CD8-positive, alpha-beta T cell (primary cell): ENCODE measurements at regions of chr2 and their contacts with region 1.

Region 1: GRCh38 chr2:127387655-127388422 is at the start of gene MAP3K2:
- DNase-seq: peak; percentile 90 to 98 (median 97)
- ATAC-seq: peak; percentile 72
- H3K4me3 ChIP-seq: peak within 1 kb of the TSS; percentile 79 to 81
- H3K4me3 Mint-ChIP-seq: peak within 1 kb of the TSS; percentile 86
- H3K27ac ChIP-seq: peak within 1 kb of the TSS; percentile 99
- H3K27ac Mint-ChIP-seq: peak within 1 kb of the TSS; percentile 99
- H3K4me1 ChIP-seq: peaks cover 36% of the 10 kb centered on the region
- H3K4me1 Mint-ChIP-seq: peaks cover 63% of the 10 kb centered on the region
- H3K27me3 ChIP-seq: no peaks in the 10 kb centered on the region
- H3K27me3 Mint-ChIP-seq: no peaks in the 10 kb centered on the region
- CTCF ChIP-seq: no peak
- total RNA-seq, gene MAP3K2: 126 to 137 TPM

Region 2: GRCh38 chr2:127293748-127294562 is 93.9 kb before region 1 on chr2 and contains the start of gene ERCC3:
- CTCF ChIA-PET with region 1: no interaction called
- POLR2A ChIA-PET with region 1: no interaction called
- intact Hi-C with region 1: loop called in 1 of 2 experiments (anchors 1 kb)
- DNase-seq: peak; percentile 56 to 90 (median 83)
- ATAC-seq: peak; percentile 91
- H3K4me3 ChIP-seq: peak within 1 kb of the TSS; percentile 75 to 91
- H3K4me3 Mint-ChIP-seq: peak within 1 kb of the TSS; percentile 94
- H3K27ac ChIP-seq: peak within 1 kb of the TSS; percentile 74 to 76
- H3K27ac Mint-ChIP-seq: peak within 1 kb of the TSS; percentile 91
- H3K4me1 ChIP-seq: peaks cover 13% of the 10 kb centered on the region
- H3K4me1 Mint-ChIP-seq: peaks cover 45% of the 10 kb centered on the region
- H3K27me3 ChIP-seq: no peaks in the 10 kb centered on the region
- H3K27me3 Mint-ChIP-seq: no peaks in the 10 kb centered on the region
- CTCF ChIP-seq: no peak
- total RNA-seq, gene ERCC3: 43.2 to 46.4 TPM

Region 3: DNA sequence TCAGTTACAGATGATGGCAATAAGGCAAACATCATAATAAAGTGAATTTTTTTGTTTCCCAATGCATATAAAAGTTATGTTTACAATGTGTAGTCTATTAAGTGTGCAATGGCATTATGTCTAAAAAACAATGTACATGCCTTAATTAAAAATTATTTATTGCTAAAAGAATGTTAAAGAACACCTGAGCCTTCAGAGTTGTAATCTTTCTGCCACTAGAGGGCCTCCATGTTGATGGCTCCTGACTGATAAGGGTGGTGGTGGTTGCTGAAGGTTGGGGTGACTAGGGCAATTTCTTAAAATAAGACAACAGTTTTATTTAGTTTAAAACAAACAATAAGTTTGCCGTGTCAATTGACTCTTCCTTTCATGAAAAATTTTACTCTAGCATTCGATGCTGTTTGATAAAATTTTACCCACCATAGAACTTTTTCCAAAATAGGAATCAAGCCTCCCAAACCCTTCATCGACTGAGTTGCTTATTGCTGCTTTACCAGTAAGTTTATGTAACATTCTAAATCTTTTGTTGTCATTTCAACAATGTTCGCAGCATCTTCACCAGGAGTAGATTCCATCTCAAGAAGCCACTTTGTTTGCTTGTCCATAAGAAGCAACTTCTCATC is 32.3 kb before region 1 on chr2:
- CTCF ChIA-PET with region 1: no interaction called
- POLR2A ChIA-PET with region 1: no interaction called
- intact Hi-C with region 1: loop called in 1 of 2 experiments (anchors 2 kb)
- DNase-seq: peak in 6 of 9 experiments; percentile 5 to 71 (median 38)
- ATAC-seq: peak; percentile 74
- H3K4me3 ChIP-seq: no peak overlapping the region
- H3K4me3 Mint-ChIP-seq: no peak overlapping the region
- H3K27ac ChIP-seq: no peak overlapping the region
- H3K27ac Mint-ChIP-seq: no peak overlapping the region
- H3K4me1 ChIP-seq: peaks cover 4% of the 10 kb centered on the region
- H3K4me1 Mint-ChIP-seq: peaks cover 68% of the 10 kb centered on the region
- H3K27me3 ChIP-seq: no peaks in the 10 kb centered on the region
- H3K27me3 Mint-ChIP-seq: no peaks in the 10 kb centered on the region
- CTCF ChIP-seq: peak; percentile 79

Region 4: GRCh38 chr2:127415593-127416505 is 28.0 kb after region 1 on chr2:
- CTCF ChIA-PET with region 1: interaction called, 5 read pairs
- POLR2A ChIA-PET with region 1: interaction called, 7 read pairs
- intact Hi-C with region 1: loop called (anchors 1 to 5 kb)
- DNase-seq: peak; percentile 65 to 91 (median 85)
- ATAC-seq: peak; percentile 94
- H3K4me3 ChIP-seq: peak overlapping the region; percentile 63 to 69
- H3K4me3 Mint-ChIP-seq: peak overlapping the region; percentile 84
- H3K27ac ChIP-seq: no peak overlapping the region
- H3K27ac Mint-ChIP-seq: peak overlapping the region; percentile 77
- H3K4me1 ChIP-seq: peaks cover 11% of the 10 kb centered on the region
- H3K4me1 Mint-ChIP-seq: peaks cover 20% of the 10 kb centered on the region
- H3K27me3 ChIP-seq: no peaks in the 10 kb centered on the region
- H3K27me3 Mint-ChIP-seq: no peaks in the 10 kb centered on the region
- CTCF ChIP-seq: peak; percentile 82

Region 5: DNA sequence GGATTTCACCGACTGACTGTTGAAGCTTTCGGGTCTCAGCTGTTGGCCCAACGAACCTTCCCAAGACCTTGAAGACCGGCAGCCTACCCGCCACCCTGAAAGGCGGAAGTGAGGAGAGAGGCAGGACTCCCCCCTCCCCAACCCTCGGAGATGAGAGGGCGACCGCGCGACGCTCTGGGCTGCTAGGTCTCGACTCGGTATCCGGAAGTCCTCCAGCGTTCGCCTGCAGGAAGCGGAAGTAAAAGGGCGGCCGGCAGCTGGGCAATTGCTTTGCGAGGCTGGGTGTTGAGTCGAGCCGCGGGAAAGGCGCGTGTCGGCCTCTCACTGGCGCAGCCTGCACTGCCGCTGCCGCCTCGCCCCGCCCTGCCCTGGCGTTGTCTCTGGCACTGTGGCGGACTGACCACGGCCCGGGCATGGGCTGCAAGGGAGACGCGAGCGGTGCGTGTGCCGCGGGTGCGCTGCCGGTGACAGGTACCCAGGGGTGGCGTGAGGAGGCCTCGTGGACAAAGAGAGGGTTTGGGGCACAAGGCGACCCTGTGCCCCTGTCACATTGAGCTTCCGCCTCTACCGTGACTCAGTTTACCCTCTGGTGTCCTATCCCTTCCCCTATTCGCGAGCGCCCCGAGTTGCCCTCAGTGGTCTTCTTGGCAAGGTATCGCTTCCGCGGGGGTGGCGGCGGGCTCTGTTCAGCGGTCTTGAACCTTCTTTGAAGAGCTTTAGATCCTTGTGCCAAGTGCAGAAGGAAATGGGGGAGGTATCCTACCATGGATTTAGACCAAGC is 703.3 kb after region 1 on chr2 and contains the start of gene UGGT1:
- CTCF ChIA-PET with region 1: no interaction called
- POLR2A ChIA-PET with region 1: no interaction called
- intact Hi-C with region 1: loop called in 1 of 2 experiments (anchors 5 kb)
- DNase-seq: peak; percentile 87 to 98 (median 94)
- ATAC-seq: peak; percentile 97
- H3K4me3 ChIP-seq: peak within 1 kb of the TSS; percentile 86 to 94
- H3K4me3 Mint-ChIP-seq: peak within 1 kb of the TSS; percentile 90
- H3K27ac ChIP-seq: peak within 1 kb of the TSS; percentile 60 to 89
- H3K27ac Mint-ChIP-seq: peak within 1 kb of the TSS; percentile 95
- H3K4me1 ChIP-seq: peaks cover 5% of the 10 kb centered on the region
- H3K4me1 Mint-ChIP-seq: peaks cover 49% of the 10 kb centered on the region
- H3K27me3 ChIP-seq: no peaks in the 10 kb centered on the region
- H3K27me3 Mint-ChIP-seq: no peaks in the 10 kb centered on the region
- CTCF ChIP-seq: no peak
- total RNA-seq, gene UGGT1: 25.6 to 25.9 TPM